Activated CD4-positive, alpha-beta T cell treated with anti-CD3 and anti-CD28 coated beads for 36 hours (primary cell): ENCODE measurements at regions of chr6 and their contacts with region 1.

Region 1: GRCh38 chr6:10411971-10412745 is 2.7 kb downstream of the TFAP2A start:
- DNase-seq: peak; percentile 63
- ATAC-seq: peak; percentile 78
- H3K4me3 Mint-ChIP-seq: peak overlapping the region; percentile 80
- H3K27ac Mint-ChIP-seq: peak overlapping the region; percentile 85
- H3K4me1 Mint-ChIP-seq: peaks cover 39% of the 10 kb centered on the region
- H3K27me3 Mint-ChIP-seq: peaks cover 85% of the 10 kb centered on the region

Region 2: GRCh38 chr6:10177703-10178102 is 234.5 kb before region 1 on chr6:
- CTCF ChIA-PET with region 1: no interaction called
- POLR2A ChIA-PET with region 1: no interaction called
- intact Hi-C with region 1: no loop called
- DNase-seq: no peak
- ATAC-seq: no peak
- H3K4me3 Mint-ChIP-seq: no peak overlapping the region
- H3K27ac Mint-ChIP-seq: no peak overlapping the region
- H3K4me1 Mint-ChIP-seq: no peaks in the 10 kb centered on the region
- H3K27me3 Mint-ChIP-seq: no peaks in the 10 kb centered on the region

Region 3: DNA sequence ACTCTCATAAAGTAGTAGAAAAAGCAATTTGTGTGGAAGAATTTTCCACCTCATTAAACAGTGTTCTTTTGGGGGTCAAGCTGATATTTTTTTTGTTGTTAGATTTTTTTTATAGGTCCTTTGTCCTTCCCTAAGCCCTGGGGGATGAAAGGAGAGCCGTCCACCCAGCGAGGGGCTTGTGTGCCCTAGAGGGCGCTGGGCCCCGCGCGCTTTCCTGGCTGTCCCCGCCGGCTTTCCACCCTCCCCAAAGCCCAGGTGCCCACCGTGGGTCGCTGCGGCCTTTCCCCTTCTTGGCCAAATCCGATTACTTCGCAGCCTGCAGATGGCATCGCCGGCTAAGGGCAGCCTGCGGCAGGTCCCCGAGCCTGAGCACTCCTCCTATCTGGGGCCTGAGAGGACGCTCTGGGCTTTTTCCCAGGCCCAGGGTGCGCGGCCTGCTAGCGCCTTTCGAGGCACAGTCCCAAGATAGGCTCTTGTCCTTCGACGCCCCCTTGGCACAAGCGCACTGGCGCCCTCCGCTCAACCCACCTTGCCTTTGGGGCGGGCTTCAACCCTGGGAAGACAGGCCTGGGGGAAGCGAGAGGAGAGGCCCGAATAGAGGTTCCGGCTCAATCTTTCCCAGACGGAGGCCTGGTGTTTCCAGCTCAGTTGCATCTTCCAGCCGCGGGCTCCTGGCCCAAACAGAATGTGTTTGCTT is 30.9 kb before region 1 on chr6:
- CTCF ChIA-PET with region 1: no interaction called
- POLR2A ChIA-PET with region 1: no interaction called
- intact Hi-C with region 1: loop called (anchors 2 to 5 kb)
- DNase-seq: peak; percentile 39
- ATAC-seq: no peak
- H3K4me3 Mint-ChIP-seq: no peak overlapping the region
- H3K27ac Mint-ChIP-seq: no peak overlapping the region
- H3K4me1 Mint-ChIP-seq: peaks cover 14% of the 10 kb centered on the region
- H3K27me3 Mint-ChIP-seq: peaks cover 67% of the 10 kb centered on the region

Region 4: DNA sequence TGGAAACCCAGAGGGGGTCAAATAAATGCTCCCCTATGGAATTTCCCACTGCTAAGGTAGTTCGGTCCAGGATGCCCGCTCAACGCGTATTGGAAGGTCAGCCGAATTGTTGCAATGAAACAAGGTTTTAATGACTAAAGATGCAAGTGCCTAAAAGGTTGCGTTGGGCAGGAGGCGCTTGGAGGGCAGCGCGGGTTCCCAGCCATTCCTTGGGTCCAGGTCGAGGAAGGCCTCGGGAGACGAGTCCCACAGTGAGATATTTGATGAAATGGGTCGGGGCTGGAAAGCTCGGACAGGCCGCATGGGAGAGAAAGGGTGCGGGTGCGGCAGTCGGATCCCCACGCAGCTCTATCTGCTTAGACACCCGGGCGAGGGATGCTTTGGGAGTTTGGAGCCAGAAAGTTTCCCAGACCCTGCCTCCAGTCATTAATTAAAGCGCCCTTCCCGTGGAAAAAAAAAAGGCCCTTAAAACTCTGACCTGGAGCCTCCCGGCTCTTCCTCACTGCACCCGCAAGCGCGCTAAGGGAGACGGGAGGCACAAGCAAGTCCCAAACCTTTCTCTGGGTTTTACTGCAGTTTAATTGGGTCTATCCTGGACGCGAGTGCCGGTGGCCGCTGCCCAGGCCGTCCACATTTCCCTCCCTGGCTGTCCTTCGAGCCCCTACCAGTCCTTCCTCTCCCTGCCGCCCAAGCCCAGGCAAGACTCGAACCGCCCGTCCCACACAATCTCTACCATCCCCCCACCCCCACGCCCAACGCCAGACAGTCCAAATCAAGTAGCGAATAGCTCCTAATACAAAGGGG is 21.5 kb before region 1 on chr6:
- CTCF ChIA-PET with region 1: interaction called, 3 read pairs
- POLR2A ChIA-PET with region 1: interaction called, 3 read pairs
- intact Hi-C with region 1: loop called in 1 of 2 experiments (anchors 1 kb)
- DNase-seq: no peak
- ATAC-seq: no peak
- H3K4me3 Mint-ChIP-seq: no peak overlapping the region
- H3K27ac Mint-ChIP-seq: no peak overlapping the region
- H3K4me1 Mint-ChIP-seq: peaks cover 6% of the 10 kb centered on the region
- H3K27me3 Mint-ChIP-seq: peaks cover 80% of the 10 kb centered on the region

Region 5: GRCh38 chr6:10886691-10887535 is 474.8 kb after region 1 on chr6 and contains the start of gene SYCP2L:
- CTCF ChIA-PET with region 1: no interaction called
- POLR2A ChIA-PET with region 1: no interaction called
- intact Hi-C with region 1: loop called in 1 of 2 experiments (anchors 5 kb)
- DNase-seq: peak; percentile 67
- ATAC-seq: peak; percentile 84
- H3K4me3 Mint-ChIP-seq: peak within 1 kb of the TSS; percentile 61
- H3K27ac Mint-ChIP-seq: no peak within 1 kb of the TSS
- H3K4me1 Mint-ChIP-seq: peaks cover 12% of the 10 kb centered on the region
- H3K27me3 Mint-ChIP-seq: peaks cover 66% of the 10 kb centered on the region
- total RNA-seq, gene SYCP2L: 0.25 TPM in 1 of 2 experiments, not detected in the other